ENCODE measurements at regions of chr2 and their contacts with region 1.

Region 1: DNA sequence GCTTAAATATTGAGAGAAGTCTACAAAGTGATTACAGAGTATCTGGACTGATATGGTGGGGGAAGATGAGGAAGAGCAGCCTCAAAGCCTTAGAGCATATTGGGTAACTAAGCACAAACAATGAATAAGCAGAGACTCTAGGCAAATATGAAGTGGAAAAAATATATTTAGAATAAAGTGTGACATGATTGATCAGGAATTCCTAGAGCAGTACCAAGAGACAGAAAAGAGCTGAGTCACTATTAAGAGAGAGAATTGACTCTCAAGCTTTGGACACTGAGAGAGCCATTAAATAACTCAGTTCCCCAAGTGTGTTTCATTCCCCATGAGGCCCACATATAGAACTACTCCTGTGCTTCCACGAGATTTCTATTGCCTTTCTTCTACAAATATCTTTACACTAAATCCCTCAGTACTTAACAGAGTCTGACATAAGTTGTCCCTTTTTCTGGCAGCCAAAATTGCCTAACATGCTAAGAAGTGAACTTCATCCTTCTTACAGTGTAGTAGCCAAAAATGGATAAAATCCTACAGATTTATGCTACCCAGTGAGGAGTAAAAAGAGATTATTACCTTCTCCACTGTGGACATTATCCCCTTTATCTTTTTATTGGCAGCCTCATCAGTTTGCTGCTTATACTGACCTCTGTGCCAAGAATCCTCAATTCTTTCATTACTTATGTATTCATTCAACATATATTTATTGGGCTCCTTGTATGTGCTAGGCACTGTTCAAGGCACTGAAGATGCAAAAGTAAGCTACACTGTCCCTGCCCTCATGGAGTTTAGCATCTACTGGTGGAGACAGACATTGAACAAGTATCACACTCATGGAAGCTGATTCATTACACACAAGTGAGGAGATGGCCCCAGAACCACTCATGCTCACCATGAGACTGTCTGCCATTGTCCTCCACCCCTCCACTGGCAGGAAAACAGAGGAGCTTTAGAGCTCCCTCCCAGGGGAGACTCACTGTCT is 45.4 kb downstream of the SLC40A1 start:
- DNase-seq: no peak

Region 2: GRCh38 chr2:189318761-189319160 is 216.4 kb before region 1 on chr2:
- intact Hi-C with region 1: loop called (anchors 10 kb)
- DNase-seq: no peak

Region 3: GRCh38 chr2:189437926-189438325 is 97.2 kb before region 1 on chr2:
- intact Hi-C with region 1: no loop called
- DNase-seq: no peak